ENCODE measurements at regions of chr14 and their contacts with region 1.

Region 1: DNA sequence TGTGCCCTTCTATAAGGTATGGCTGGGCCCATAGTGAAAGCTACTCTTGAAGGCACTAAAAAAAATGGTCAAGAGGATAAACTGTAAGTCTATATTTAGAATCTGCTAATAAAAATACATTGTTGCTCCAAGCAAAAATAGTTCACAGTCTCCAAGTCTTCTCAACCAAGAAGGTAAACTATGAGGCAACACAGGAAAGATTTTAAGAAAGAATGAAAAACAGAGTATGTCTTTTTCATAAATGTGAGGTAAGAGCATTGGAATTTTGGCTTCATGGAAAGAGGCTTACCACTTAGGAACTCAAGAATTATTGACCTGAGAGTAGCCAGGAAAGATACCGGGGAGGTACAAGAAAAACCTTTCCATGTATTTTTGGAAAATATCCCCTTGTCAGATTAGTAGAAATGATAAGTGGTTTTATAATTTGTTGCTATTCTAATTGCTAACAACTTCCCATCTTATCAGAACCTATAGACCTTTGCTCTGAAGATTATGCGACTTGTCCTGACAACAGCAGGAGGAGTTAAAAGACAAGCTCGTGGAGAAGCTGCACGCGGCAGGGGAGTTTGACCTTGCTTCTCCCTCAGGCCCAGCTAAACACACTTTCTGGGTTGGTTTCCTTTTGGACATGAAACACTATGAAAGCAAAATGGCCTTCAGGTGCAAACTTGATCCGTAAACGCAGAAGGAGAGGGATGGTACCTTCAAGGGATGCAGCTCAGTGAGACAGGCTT is 238.1 kb downstream of the FOXN3 start:
- DNase-seq: no peak
- ATAC-seq: no peak
- H3K4me3 ChIP-seq: no peak overlapping the region
- H3K27ac ChIP-seq: peak overlapping the region in 1 of 10 donors; percentile 12
- H3K4me1 ChIP-seq: peaks cover 0 to 46% (median 23%) of the 10 kb centered on the region in 9 donors
- H3K27me3 ChIP-seq: no peaks in the 10 kb centered on the region
- CTCF ChIP-seq: no peak

Region 2: DNA sequence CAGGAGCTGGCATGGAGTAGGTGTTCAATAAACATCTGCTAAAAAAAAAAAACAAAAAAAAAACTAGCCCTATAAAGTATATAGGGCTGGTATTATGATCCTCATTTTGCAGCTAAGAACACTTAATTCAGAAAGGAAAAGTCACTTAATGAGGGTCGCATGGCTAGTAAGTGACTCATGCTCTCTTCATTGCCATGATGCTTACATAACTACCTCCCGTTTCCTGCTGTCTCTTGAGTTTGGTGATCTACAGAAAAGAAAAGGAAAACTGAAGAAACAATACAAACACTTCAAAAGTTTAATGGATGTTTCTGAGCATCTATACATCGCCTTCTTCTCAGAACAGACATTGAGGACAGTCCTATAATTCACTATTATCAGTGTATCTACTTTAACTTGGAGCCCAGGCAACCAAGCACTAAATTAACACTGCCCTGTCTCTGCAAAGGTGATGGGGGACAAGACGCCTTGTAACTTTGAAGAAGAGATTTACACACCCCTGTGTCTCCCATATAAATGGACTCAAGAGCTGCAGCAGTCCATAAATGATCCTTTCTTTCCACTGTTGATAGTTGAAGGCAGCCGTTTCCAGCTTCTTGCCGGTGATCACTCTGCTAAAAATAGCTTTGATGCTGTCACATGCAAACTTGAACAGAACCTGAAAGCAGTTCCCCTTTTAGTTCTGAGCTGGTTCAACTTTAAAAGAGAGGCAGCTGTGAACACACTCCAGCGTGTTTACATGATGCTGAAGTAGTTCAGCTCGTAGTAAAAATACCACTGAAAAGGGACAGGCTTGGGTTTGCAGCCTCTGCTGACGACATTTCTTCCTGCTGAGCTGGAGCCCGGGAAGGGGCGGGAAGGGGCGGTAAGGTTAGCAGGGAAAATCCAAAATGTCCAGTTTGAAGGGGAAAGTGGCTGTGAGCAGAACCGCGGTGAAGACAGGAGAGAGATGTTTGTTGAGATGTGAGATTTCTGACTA is 124.8 kb after region 1 on chr14:
- intact Hi-C with region 1: loop called in 2 of 10 experiments (anchors 10 kb)
- DNase-seq: peak; percentile 29 to 80
- ATAC-seq: peak; percentile 71 to 89 (median 86)
- H3K4me3 ChIP-seq: peak overlapping the region in 8 of 10 donors; percentile 2 to 34 (median 29)
- H3K27ac ChIP-seq: peak overlapping the region; percentile 64 to 95 (median 88)
- H3K4me1 ChIP-seq: peaks cover 8 to 69% (median 52%) of the 10 kb centered on the region in 9 donors
- H3K27me3 ChIP-seq: no peaks in the 10 kb centered on the region
- CTCF ChIP-seq: no peak

Region 3: DNA sequence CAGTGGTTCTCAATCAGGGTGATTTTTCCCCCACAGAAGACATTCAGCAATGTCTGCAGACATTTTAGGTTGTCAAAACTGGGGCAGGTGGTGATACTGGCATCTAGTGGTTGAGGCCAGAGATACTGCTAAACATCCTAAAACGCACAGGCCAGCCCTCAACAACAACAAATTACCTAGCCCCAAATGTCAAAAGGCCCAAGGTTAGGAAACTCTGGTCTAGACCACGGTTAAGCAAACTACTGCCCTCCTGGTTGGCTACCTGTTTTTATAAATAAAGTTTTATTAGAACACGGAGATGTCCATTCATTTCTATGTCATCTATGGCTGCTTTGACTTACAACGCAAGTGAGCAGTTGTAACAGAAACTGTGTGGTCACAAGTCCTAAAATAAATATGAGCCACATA is 588.9 kb after region 1 on chr14:
- intact Hi-C with region 1: loop called in 3 of 10 experiments (anchors 10 kb)
- DNase-seq: peak in 1 of 2 donors; percentile 49
- ATAC-seq: peak in 6 of 8 donors; percentile 58 to 74 (median 66)
- H3K4me3 ChIP-seq: no peak overlapping the region
- H3K27ac ChIP-seq: no peak overlapping the region
- H3K4me1 ChIP-seq: peaks cover 0 to 25% (median 0%) of the 10 kb centered on the region in 9 donors
- H3K27me3 ChIP-seq: no peaks in the 10 kb centered on the region
- CTCF ChIP-seq: peak; percentile 43 to 75 (median 60)

Region 4: GRCh38 chr14:89899917-89900663 is 721.1 kb after region 1 on chr14:
- intact Hi-C with region 1: loop called in 1 of 10 experiments (anchors 10 kb)
- DNase-seq: no peak
- ATAC-seq: peak in 1 of 8 donors; percentile 53
- H3K4me3 ChIP-seq: no peak overlapping the region
- H3K27ac ChIP-seq: no peak overlapping the region
- H3K4me1 ChIP-seq: peaks cover 0 to 12% (median 0%) of the 10 kb centered on the region in 9 donors
- H3K27me3 ChIP-seq: no peaks in the 10 kb centered on the region
- CTCF ChIP-seq: peak in 8 of 9 donors; percentile 29 to 69 (median 60)

Region 5: DNA sequence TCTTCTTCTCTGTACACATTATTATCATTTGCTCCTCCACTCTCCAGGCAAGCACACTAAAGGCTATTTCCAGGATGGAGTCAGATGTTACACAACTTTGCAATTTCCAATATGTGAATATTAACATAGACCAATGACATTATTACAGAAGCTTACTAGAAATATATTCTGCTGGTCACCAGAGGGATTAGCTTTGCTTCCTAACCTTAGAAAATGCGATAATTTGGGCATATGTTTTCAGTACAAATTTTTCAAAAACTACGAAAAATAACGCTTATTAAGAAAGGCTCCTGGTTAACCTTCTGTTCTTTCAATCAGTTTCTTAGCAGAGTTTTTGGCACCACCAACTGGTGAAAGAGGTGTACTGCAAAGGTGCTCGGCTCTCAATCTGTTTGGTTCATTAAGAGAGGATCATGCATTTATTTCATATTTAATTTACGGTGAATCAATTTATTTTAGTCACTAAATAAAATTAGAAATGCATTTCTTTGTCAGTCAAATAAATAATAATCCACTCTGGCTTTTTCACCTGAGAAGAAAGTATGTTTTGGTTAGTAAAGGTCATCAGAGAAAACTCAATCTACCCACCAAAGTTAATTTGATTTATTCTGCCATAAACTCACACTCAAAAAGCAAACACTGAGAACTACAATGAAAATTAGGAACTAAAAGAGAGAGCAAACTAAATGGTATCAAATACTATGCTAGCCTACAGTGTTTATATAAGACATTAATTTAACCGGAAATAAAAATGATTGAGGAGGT is 736.3 kb after region 1 on chr14:
- intact Hi-C with region 1: loop called in 1 of 10 experiments (anchors 10 kb)
- DNase-seq: peak in 1 of 2 donors; percentile 41
- ATAC-seq: peak in 3 of 8 donors; percentile 36 to 65 (median 63)
- H3K4me3 ChIP-seq: no peak overlapping the region
- H3K27ac ChIP-seq: no peak overlapping the region
- H3K4me1 ChIP-seq: peaks cover 0 to 14% (median 0%) of the 10 kb centered on the region in 9 donors
- H3K27me3 ChIP-seq: no peaks in the 10 kb centered on the region
- CTCF ChIP-seq: peak; percentile 89 to 98 (median 96)